ENCODE measurements at regions of chr5 and their contacts with region 1.

Region 1: GRCh38 chr5:76413746-76414145 is 10.7 kb downstream of the IQGAP2 start:
- DNase-seq: no peak

Region 2: DNA sequence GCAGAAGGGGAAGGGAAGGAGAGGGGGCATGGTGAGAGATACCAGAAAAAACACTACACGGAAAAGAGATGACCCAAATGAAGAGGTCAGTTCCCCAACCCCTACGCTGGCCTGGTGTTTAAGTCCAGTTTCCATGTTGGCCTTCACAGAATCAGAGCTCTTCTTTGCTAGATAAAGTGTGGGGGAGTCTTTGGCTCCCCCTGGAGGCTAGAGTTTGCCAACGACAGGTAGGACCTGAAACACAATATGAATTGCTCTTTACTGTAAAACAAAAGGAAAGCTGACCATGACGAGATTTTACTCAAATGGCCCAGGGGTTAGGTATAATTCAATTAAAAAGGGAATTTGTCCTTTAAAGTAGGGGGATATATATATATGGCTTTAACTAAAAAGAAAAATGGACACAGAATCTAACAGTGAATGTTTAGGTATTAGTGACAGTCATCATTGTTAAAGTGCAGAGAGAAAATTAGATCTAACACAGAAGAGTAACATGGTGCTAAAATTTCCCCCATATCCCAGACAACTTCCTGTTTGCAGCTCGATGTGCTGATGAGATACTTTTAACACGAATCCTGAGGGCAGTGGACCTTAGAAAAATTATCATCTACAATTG is 238.6 kb before region 1 on chr5:
- intact Hi-C with region 1: no loop called
- DNase-seq: no peak

Region 3: DNA sequence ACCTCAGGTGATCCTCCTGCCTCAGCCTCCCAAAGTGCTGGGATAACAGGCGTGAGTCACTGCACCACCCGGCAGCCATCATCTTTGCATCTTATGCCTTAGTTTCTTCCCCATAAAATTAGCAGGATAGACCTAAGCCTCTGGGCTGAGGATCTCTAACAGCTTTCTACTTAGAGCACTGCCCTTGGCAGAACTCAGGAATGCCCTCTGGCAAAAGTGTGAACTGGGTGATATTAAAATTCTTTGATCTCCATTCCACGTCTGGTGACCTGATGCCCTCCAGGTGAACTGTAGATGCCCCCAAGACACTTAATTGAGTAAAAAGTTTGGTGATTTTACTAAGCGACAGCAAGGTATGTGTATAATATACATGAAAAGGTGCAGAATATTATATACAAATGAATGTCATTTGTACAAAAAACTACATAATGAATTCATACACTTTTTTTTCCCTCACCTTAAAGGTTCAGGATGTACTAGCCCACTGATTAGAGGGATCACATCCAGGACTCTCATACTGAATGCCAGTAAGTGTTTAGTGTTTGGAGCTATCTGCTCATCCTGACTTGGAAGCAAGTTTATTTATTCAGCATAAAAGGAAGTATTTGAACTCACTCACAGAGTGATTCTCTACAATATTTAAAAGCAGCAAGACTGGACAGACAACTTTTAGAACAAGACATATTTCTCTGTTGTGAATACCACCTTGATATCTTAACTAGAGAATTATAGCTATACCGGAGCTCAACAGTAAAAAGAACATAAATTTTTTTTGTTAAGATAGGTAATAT is 25.7 kb before region 1 on chr5:
- intact Hi-C with region 1: loop called in 1 of 2 experiments (anchors 1 kb)
- DNase-seq: no peak

Region 4: GRCh38 chr5:76451031-76451701 is 37.4 kb after region 1 on chr5:
- intact Hi-C with region 1: no loop called
- DNase-seq: no peak

Measured in posterior vena cava (tissue), 2 donors.